ENCODE measurements at regions of chr3 and their contacts with region 1.

Region 1: GRCh38 chr3:185937689-185938463 is at the start of gene TRA2B:
- DNase-seq: peak; percentile 99
- H3K4me3 Mint-ChIP-seq: peak within 1 kb of the TSS; percentile 98
- H3K27ac Mint-ChIP-seq: peak within 1 kb of the TSS; percentile 100
- H3K4me1 Mint-ChIP-seq: peaks cover 28% of the 10 kb centered on the region
- H3K27me3 Mint-ChIP-seq: peaks cover 6% of the 10 kb centered on the region
- total RNA-seq, gene TRA2B: 194 to 195 TPM

Region 2: GRCh38 chr3:185585859-185586685 is 351.8 kb before region 1 on chr3 and contains the start of gene SENP2:
- CTCF ChIA-PET with region 1: no interaction called
- POLR2A ChIA-PET with region 1: interaction called, 13 read pairs
- DNase-seq: peak; percentile 100
- H3K4me3 Mint-ChIP-seq: peak within 1 kb of the TSS; percentile 78
- H3K27ac Mint-ChIP-seq: peak within 1 kb of the TSS; percentile 82
- H3K4me1 Mint-ChIP-seq: peaks cover 36% of the 10 kb centered on the region
- H3K27me3 Mint-ChIP-seq: no peaks in the 10 kb centered on the region
- total RNA-seq, gene SENP2: 32.8 to 33.6 TPM

Region 3: DNA sequence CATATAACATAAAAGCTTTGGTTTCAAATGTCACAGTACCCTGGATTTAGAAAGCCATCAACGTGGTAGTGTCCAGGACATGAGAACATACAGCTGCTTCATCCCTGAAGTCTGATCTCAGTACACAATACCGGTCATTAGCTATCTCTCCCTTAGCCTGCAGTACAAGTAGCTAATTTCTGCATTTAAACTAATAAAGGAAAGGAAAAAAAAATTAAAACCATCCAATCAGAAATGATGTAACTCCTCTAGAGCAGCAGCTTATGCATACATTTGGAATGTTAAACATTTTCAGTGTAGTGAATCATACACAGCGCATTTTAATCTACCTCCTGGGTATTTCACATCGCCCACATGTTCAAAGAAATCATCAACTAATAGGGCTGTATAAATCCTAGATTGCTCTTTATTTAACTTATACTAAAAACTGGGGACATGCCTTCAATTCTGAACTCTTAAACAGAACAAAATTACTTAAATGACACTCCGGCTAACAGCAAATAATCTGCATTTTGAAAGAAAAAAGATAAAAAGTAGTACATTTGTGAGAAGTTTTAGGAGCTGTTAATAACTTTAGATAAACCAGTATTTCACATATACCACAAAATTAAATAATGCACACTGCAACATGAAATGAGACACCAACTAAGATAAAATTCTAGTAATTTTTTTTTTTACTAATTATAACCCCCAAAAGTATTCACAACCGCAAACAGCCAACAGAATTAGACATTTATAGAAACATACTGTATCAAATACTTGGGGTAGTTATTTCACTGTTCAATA is 116.7 kb before region 1 on chr3:
- CTCF ChIA-PET with region 1: no interaction called
- POLR2A ChIA-PET with region 1: no interaction called
- DNase-seq: no peak
- H3K4me3 Mint-ChIP-seq: no peak overlapping the region
- H3K27ac Mint-ChIP-seq: no peak overlapping the region
- H3K4me1 Mint-ChIP-seq: peaks cover 10% of the 10 kb centered on the region
- H3K27me3 Mint-ChIP-seq: peaks cover 64% of the 10 kb centered on the region

Region 4: DNA sequence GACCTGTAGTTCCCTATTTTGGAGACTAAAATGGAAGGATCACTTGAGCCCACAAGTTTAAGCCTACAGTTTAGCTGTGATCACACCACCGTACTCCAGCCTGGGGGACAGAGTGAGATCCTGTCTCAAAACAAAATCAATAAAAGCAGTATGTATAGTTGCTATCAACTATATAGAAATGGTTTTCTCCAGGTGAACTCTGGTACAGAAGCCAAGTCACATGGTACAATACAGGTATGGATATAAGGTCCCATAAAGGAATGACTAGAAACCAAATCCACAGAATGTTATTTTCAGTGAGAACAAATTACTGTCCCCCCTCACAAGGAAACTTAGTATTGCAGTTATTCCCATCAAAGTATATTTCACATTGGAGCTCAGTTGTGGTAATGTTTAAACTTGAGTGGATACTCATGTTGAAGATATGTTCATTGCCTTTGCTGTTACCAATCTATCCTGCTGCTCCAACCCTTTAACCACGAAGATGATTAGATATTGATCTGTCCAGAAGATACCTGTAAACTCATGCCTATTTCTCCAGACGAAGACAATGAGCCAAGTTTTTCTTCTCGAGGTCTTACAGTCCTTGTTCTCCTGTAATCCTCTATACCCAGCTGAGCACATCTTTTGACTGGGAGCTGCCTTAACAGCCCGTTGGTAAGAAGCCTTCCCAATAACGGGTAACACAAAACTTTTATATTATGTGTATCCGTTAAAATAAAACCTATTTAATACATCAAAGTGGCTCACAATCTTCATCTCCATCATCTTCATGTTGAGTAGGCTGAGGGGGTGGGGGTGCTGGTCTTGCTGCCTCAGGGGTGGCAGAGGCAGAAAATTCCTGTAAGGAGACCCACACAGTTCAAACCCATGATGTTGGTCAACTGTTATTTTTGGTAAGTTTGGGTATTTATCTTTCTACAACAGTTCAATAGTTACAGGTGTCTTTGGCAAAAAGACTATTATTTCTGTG is 24.7 kb before region 1 on chr3:
- CTCF ChIA-PET with region 1: interaction called, 12 read pairs
- POLR2A ChIA-PET with region 1: interaction called, 44 read pairs
- DNase-seq: no peak
- H3K4me3 Mint-ChIP-seq: no peak overlapping the region
- H3K27ac Mint-ChIP-seq: no peak overlapping the region
- H3K4me1 Mint-ChIP-seq: no peaks in the 10 kb centered on the region
- H3K27me3 Mint-ChIP-seq: no peaks in the 10 kb centered on the region

Region 5: GRCh38 chr3:185920168-185920567 is 17.7 kb before region 1 on chr3:
- CTCF ChIA-PET with region 1: interaction called, 50 read pairs
- POLR2A ChIA-PET with region 1: interaction called, 210 read pairs
- DNase-seq: no peak
- H3K4me3 Mint-ChIP-seq: no peak overlapping the region
- H3K27ac Mint-ChIP-seq: no peak overlapping the region
- H3K4me1 Mint-ChIP-seq: peaks cover 21% of the 10 kb centered on the region
- H3K27me3 Mint-ChIP-seq: no peaks in the 10 kb centered on the region

Region 6: GRCh38 chr3:186570096-186570940 is 632.4 kb after region 1 on chr3 and contains the start of gene DNAJB11:
- CTCF ChIA-PET with region 1: interaction called, 7 read pairs
- POLR2A ChIA-PET with region 1: interaction called, 100 read pairs
- DNase-seq: peak; percentile 99
- H3K4me3 Mint-ChIP-seq: peak within 1 kb of the TSS; percentile 96
- H3K27ac Mint-ChIP-seq: peak within 1 kb of the TSS; percentile 92
- H3K4me1 Mint-ChIP-seq: peaks cover 62% of the 10 kb centered on the region
- H3K27me3 Mint-ChIP-seq: no peaks in the 10 kb centered on the region
- total RNA-seq, gene DNAJB11: 50.7 to 55.7 TPM